Posterior cingulate gyrus (tissue), 11 donors: ENCODE measurements at regions of chr1 and their contacts with region 1.

Region 1: GRCh38 chr1:22861764-22862440 is 110.8 kb downstream of the LACTBL1 start:
- DNase-seq: peak in 6 of 10 donors; percentile 44 to 93 (median 58)

Region 2: DNA sequence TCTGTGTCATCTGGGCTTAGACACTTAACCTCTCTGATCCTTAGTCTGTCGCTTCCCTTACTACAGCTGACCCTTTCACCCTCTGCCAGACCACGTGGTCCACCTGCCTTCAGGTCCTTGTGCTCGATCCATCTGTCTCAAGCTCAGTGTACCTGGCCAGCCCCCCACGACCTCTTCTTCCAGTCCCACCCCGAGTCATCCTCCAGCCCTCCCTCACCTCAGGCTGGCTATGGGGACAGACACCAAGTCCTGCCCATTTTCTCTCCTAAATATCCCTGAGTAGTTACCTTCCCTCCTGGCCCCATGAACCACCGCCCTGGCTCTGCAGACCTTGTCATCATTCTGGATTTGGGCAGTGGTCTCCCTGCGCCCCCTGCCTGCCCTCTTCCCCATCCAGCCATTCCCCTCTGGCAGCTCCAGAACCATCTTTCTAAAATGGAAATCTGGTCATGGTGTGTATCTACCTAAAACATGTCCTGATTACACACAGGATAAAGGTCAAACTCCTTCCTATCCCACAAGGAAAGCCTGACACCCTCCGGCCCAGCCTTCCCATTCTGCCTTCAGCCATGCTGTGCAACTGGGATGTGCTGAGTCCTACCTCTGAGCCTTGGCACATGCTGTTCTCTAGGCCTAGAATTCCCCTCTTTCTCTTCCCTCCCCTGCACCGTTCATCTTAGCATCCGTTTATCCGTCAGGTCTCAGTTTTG is 43.7 kb before region 1 on chr1:
- intact Hi-C with region 1: loop called (anchors 2 kb)
- DNase-seq: peak in 1 of 10 donors; percentile 80